Esophagus muscularis mucosa (tissue), 4 donors: ENCODE measurements at regions of chr1 and their contacts with region 1.

Region 1: DNA sequence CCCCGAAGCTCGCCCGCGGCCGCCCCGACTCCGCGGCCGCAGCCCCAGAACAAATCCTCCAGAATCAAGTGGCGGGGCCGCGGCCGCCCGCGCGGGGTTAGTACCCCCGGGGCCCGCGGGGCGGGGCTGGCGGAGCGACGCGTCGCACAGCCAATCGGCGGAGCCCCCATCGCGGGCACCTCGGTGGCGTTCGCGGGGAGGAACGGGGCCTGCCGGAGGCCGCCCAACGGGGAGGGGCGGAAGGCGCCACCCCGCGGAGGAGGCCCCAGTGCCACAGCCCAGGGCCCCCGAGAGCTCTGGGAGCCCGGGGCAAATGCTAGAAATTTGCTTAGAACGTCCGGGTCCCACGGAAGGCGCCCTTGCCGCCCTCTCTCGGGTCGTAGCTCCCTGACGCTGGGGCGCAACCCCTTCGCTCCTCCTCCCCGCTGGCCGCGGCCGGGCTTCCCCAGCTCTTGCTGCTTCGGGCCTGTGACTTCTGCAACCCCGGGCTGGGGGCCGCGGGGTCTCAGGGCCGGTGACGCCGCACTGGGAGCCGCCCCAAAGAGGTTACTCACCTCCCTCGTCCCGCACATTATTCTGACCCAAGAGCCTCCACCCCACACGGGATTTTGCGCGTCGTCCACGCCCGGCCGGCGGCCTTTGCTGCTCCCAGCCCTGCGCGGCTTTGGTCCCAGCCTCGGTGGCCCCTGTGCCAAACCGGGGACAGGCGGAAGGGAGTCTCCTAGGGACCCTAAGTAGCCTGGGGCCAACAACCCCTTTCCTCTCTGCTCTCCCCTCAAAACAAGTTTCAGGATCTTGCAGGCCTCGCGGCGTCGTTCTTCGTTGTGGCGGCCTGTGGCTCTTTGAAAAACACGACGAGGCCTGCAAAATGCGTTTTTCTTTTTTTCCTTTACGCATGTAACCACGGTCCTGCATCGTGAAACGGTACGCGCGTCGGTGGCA is at the start of gene RUNX3:
- DNase-seq: no peak
- H3K4me3 ChIP-seq: peak within 1 kb of the TSS; percentile 42 to 57 (median 44)
- H3K27ac ChIP-seq: peak within 1 kb of the TSS; percentile 3 to 57 (median 40)
- H3K4me1 ChIP-seq: peaks cover 23 to 52% (median 42%) of the 10 kb centered on the region in 4 donors
- H3K27me3 ChIP-seq: peaks cover 0 to 98% (median 86%) of the 10 kb centered on the region in 4 donors
- CTCF ChIP-seq: no peak
- EP300 ChIP-seq: no peak
- POLR2A ChIP-seq: no peak
- total RNA-seq, gene RUNX3: 0.91 to 4.4 (median 2.3) TPM

Region 2: GRCh38 chr1:25099343-25099951 is 169.0 kb after region 1 on chr1:
- intact Hi-C with region 1: loop called (anchors 10 kb)
- DNase-seq: no peak
- H3K4me3 ChIP-seq: no peak overlapping the region
- H3K27ac ChIP-seq: no peak overlapping the region
- H3K4me1 ChIP-seq: peaks cover 0 to 4% (median 0%) of the 10 kb centered on the region in 4 donors
- H3K27me3 ChIP-seq: peaks cover 0 to 33% (median 0%) of the 10 kb centered on the region in 4 donors
- CTCF ChIP-seq: no peak
- EP300 ChIP-seq: no peak
- POLR2A ChIP-seq: no peak

Region 3: DNA sequence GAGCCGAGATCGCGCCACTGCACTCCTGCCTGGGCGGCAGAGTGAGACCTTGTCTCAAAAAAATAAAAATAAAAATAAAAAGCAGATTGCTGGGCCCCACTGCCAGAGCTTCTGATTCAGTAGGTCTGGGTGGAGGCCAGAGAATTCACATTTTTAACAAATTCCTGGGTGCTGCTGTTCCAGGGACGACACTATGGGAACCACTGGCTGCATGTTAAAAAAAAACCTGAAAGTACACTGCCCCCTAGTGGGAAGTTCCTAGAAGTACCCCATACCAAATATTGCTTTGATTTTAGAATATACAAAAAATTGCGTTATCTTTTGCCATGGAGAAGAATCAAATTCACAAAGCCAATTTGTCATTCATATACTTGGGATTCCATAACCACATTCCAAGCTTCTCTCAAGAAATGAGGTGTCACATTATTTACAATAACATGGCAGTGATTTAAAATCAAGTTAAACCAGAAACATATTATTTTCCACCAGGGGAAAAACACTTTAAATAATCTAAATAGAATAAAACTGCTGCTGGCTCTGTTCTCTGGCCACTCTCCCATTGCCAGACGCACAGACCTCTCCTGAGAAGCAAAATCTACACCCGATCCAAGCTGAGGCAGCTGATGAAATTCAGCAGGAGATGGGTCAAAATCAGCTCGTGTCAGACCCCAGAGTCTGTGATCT is 274.5 kb after region 1 on chr1:
- intact Hi-C with region 1: loop called (anchors 10 kb)
- DNase-seq: no peak
- H3K4me3 ChIP-seq: no peak overlapping the region
- H3K27ac ChIP-seq: no peak overlapping the region
- H3K4me1 ChIP-seq: peaks cover 0 to 4% (median 0%) of the 10 kb centered on the region in 4 donors
- H3K27me3 ChIP-seq: peaks cover 0 to 13% (median 0%) of the 10 kb centered on the region in 4 donors
- CTCF ChIP-seq: peak; percentile 69 to 92 (median 78)
- EP300 ChIP-seq: no peak
- POLR2A ChIP-seq: no peak